Activated B cell treated with CpG ODN at 0.5 μM for 24 hours (primary cell): ENCODE measurements at regions of chr2 and their contacts with region 1.

Region 1: GRCh38 chr2:54728669-54729120 is 5.2 kb downstream of the EML6 start:
- DNase-seq: no peak
- ATAC-seq: no peak
- H3K4me3 Mint-ChIP-seq: no peak overlapping the region
- H3K27ac Mint-ChIP-seq: no peak overlapping the region
- H3K4me1 Mint-ChIP-seq: peaks cover 20% of the 10 kb centered on the region
- H3K27me3 Mint-ChIP-seq: peaks cover 5% of the 10 kb centered on the region
- CTCF ChIP-seq: no peak

Region 2: GRCh38 chr2:54750040-54750439 is 21.3 kb after region 1 on chr2:
- CTCF ChIA-PET with region 1: no interaction called
- POLR2A ChIA-PET with region 1: no interaction called
- intact Hi-C with region 1: loop called (anchors 1 kb)
- DNase-seq: no peak
- ATAC-seq: no peak
- H3K4me3 Mint-ChIP-seq: no peak overlapping the region
- H3K27ac Mint-ChIP-seq: no peak overlapping the region
- H3K4me1 Mint-ChIP-seq: peaks cover 2% of the 10 kb centered on the region
- H3K27me3 Mint-ChIP-seq: no peaks in the 10 kb centered on the region
- CTCF ChIP-seq: no peak